OCI-LY7 (cell line): ENCODE measurements at regions of chr6 and their contacts with region 1.

Region 1: DNA sequence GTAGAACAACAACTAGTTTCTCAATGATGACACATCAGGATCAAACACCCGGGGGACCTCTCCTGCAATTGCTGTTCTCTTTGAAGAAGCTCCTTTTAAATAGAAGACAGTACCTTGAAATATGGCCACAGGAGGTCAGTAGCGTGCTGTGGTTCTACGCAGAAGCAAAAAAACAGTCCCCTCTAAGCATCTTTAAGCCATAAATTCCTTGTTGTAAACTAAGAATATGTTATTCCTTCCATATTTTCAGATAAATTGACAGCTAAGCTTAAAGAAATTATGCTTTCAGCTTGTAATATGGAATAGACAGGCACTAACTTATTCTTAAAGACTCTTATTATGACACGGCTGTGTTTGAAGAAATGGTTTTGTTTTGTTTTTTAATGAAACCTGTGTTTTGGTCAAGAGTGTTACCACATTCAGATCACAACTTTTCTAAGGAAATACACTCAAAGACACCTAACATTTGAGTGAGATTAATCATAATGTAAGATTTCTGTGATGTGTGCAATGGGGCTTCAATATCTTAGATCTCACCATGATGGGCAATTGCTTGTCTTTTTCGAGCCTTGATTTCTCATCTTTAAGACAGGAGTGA is 49.7 kb upstream of the IL20RA start:
- DNase-seq: peak; percentile 83
- H3K4me3 ChIP-seq: no peak overlapping the region
- H3K27ac ChIP-seq: peak overlapping the region; percentile 42
- H3K4me1 ChIP-seq: peaks cover 53% of the 10 kb centered on the region
- CTCF ChIP-seq: peak; percentile 98

Region 2: GRCh38 chr6:137165375-137166246 is 71.1 kb after region 1 on chr6:
- CTCF ChIA-PET with region 1: interaction called, 34 read pairs
- POLR2A ChIA-PET with region 1: interaction called, 6 read pairs
- intact Hi-C with region 1: loop called (anchors 1 kb)
- DNase-seq: peak; percentile 79
- H3K4me3 ChIP-seq: no peak overlapping the region
- H3K27ac ChIP-seq: no peak overlapping the region
- H3K4me1 ChIP-seq: peaks cover 15% of the 10 kb centered on the region
- CTCF ChIP-seq: peak; percentile 87

Region 3: GRCh38 chr6:137271245-137272183 is 177.0 kb after region 1 on chr6:
- CTCF ChIA-PET with region 1: interaction called, 3 read pairs
- POLR2A ChIA-PET with region 1: interaction called, 4 read pairs
- intact Hi-C with region 1: loop called (anchors 1 kb)
- DNase-seq: peak; percentile 66
- H3K4me3 ChIP-seq: no peak overlapping the region
- H3K27ac ChIP-seq: no peak overlapping the region
- H3K4me1 ChIP-seq: no peaks in the 10 kb centered on the region
- CTCF ChIP-seq: peak; percentile 97

Region 4: GRCh38 chr6:137320269-137320668 is 225.8 kb after region 1 on chr6:
- CTCF ChIA-PET with region 1: interaction called, 11 read pairs
- POLR2A ChIA-PET with region 1: interaction called, 12 read pairs
- intact Hi-C with region 1: no loop called
- DNase-seq: no peak
- H3K4me3 ChIP-seq: no peak overlapping the region
- H3K27ac ChIP-seq: no peak overlapping the region
- H3K4me1 ChIP-seq: no peaks in the 10 kb centered on the region
- CTCF ChIP-seq: no peak

Region 5: DNA sequence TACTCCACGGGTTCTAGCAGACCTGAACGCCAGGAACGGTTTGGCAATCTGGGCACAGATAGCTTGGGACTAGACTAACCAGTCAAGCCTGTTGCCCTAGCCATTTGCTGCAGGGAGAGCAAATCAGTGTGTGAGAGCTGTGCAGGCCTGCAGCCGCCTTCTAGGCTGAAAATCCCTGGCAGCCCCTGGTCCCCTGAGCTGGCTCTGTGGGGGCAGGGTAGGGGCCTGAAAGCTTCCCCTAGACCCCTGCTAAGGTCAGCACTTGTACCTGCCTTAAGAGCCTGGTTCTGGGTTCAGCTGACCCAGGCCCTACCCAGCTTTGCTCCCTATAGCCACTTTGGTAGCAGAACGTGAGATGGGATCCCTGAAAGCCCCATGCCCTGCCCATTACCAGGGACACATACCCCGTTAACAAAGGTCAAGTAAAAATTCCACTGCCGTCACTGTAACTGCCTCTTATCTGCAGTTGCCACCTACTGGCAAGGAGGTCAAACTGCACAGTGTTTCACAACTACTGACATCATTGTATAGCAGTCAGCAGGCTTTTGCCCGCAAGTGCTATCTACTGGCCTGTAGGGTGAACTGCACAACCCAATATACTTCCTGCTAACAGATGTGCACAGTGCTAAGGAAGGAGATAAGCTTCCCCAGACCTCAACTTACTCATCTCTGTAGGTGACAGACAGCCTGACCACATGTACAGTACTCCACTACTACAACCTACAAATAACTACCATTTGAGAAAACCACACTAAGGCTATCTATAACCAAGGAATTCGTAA is 494.7 kb after region 1 on chr6:
- CTCF ChIA-PET with region 1: interaction called, 3 read pairs
- POLR2A ChIA-PET with region 1: no interaction called
- intact Hi-C with region 1: loop called (anchors 2 kb)
- DNase-seq: peak; percentile 81
- H3K4me3 ChIP-seq: no peak overlapping the region
- H3K27ac ChIP-seq: no peak overlapping the region
- H3K4me1 ChIP-seq: no peaks in the 10 kb centered on the region
- CTCF ChIP-seq: peak; percentile 95

Region 6: GRCh38 chr6:137951064-137951597 is 856.6 kb after region 1 on chr6:
- CTCF ChIA-PET with region 1: no interaction called
- POLR2A ChIA-PET with region 1: no interaction called
- intact Hi-C with region 1: no loop called
- DNase-seq: peak; percentile 89
- H3K4me3 ChIP-seq: peak overlapping the region; percentile 53
- H3K27ac ChIP-seq: peak overlapping the region; percentile 86
- H3K4me1 ChIP-seq: peaks cover 49% of the 10 kb centered on the region
- CTCF ChIP-seq: peak; percentile 69